Psoas muscle (tissue), 8 donors: ENCODE measurements at regions of chr6 and their contacts with region 1.

Region 1: DNA sequence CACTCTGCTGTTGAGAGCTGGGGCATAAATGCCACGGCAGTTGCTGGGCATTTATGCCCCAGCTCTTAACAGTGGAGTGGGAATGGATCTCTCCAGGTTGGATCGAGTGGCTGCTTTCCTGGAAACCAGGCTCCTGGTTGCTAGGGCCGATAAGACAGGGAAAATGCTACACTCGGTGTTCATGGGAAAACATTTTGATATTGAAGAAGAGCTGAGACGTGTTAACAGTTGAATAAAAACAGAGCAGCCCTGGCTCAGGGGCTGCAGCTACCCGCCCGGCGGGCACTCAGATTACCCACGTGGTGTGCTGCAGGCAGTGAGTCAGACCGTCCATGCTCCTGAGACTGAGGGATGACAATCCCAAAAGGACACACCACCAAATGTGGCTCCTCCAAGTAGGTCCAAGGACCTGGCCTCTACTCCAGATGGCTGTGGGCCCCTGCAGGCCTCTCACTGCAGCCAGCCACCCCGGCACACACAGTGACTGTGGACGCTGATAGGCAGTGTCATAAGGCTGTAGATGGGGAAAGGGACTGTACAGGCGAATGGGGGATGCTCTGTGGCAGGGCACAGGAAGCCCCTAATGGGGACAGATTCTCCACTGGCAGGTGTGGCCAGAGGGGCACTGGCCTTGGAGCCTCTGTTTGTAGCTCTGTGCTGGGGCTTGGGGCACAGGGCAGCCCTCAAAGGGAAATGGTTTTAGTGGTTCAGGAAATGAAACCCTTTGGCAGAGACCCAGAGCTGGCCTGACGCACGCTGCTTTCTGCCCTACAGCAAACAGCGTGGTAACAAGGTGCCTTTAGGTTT is 237.8 kb downstream of the LY86 start:
- DNase-seq: peak; percentile 66 to 89
- ATAC-seq: peak; percentile 88 to 92 (median 88)
- H3K4me3 ChIP-seq: peak overlapping the region; percentile 40
- H3K27ac ChIP-seq: peak overlapping the region; percentile 98
- H3K4me1 ChIP-seq: peaks cover 27% of the 10 kb centered on the region
- H3K27me3 ChIP-seq: no peaks in the 10 kb centered on the region
- CTCF ChIP-seq: no peak

Region 2: GRCh38 chr6:6890400-6890858 is 64.1 kb after region 1 on chr6:
- intact Hi-C with region 1: loop called (anchors 5 kb)
- DNase-seq: peak; percentile 54 to 76
- ATAC-seq: no peak
- H3K4me3 ChIP-seq: peak overlapping the region; percentile 7
- H3K27ac ChIP-seq: peak overlapping the region; percentile 92
- H3K4me1 ChIP-seq: peaks cover 51% of the 10 kb centered on the region
- H3K27me3 ChIP-seq: no peaks in the 10 kb centered on the region
- CTCF ChIP-seq: no peak